Left ventricle myocardium superior (tissue), 1 donor: ENCODE measurements at regions of chr22 and their contacts with region 1.

Region 1: GRCh38 chr22:35921777-35922176 is 106.8 kb downstream of the RBFOX2 start:
- DNase-seq: peak; percentile 23
- ATAC-seq: peak; percentile 93

Region 2: DNA sequence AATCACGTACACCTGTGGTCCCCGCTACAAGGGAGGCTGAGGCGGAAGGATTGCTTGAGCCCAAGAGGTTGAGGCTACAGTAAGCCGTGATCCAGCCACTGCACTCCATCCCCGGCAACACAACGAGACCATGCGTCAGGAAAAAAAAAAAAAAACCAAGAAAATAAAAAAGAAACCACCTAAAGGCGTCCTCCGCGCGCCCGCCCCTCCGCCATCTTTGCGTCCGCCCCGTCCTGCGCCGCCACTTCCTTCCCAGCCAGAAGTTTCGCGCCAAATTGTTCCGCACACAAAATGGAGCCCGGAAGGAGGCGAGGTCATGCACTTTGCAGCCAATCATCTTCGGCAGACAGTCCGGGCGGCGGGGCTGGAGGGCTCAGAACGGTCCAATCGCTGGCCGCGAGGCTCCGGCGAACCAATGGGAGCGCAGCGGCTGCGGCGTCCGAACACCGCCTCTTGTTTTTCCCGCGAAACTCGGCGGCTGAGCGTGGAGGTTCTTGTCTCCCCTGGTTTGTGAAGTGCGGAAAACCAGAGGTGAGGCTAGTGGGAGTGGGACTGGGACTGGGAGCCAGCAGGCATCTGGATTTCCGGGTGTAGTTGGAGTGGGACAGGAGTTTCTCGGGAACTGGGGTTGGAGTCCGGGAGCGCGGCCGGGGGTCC is 522.0 kb before region 1 on chr22 and contains the start of gene MCM5:
- intact Hi-C with region 1: no loop called
- DNase-seq: peak; percentile 97
- ATAC-seq: peak; percentile 99
- total RNA-seq, gene MCM5: 10.8 TPM

Region 3: DNA sequence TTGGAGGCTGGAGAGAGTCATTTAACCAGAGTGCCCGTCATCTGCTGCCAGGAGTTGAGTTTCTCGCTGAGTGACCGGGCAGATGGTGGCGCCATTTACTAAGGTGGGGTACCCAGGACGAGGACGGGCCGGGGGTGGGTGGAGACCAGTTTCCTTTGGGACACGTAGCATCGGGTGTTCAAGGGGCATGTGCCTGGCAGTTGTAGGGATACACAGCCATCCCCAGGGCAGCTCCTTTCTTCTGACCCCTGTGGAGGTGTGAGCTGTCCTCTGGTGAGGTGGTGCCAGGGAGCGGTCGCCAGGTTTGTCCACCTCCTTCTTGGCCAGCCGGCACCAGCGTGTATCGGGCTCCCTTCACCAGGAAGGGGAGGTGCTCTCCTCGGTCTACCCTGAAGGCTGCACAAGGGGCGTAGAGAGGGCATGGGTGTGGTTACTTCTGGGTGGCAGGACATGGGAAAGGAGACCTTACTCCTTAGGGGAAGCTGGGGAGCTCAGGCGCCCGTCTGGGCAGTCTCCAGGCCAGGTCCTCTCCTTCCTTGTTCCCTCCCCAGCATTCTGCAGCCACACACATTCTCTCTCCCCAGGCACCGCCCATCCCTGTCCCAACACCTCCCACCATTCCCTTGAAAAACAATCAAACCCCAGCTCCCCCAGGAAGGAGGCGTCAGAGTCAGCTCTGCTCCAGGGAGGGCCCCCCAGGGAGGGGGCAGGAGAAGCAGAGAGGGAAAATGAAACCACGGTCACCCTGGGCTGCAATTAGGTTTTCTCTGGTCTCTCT is 294.3 kb before region 1 on chr22:
- intact Hi-C with region 1: loop called (anchors 5 kb)
- DNase-seq: peak; percentile 86
- ATAC-seq: peak; percentile 69

Region 4: GRCh38 chr22:35684270-35684700 is 237.5 kb before region 1 on chr22:
- intact Hi-C with region 1: no loop called
- DNase-seq: no peak
- ATAC-seq: peak; percentile 97

Region 5: GRCh38 chr22:35860087-35860733 is 61.6 kb before region 1 on chr22:
- intact Hi-C with region 1: no loop called
- DNase-seq: no peak
- ATAC-seq: no peak